ENCODE measurements at regions of chr1 and their contacts with region 1.

Region 1: GRCh38 chr1:223081181-223081994 is 61.7 kb downstream of the TLR5 start:
- DNase-seq: peak; percentile 85
- H3K4me3 ChIP-seq: peak overlapping the region; percentile 17 to 49 (median 25)
- H3K27ac ChIP-seq: peak overlapping the region; percentile 60 to 76 (median 64)
- H3K4me1 ChIP-seq: peaks cover 0 to 12% (median 3%) of the 10 kb centered on the region in 4 donors
- H3K27me3 ChIP-seq: no peaks in the 10 kb centered on the region
- CTCF ChIP-seq: peak; percentile 92 to 97 (median 94)
- EP300 ChIP-seq: no peak
- POLR2A ChIP-seq: no peak

Region 2: GRCh38 chr1:222754366-222755139 is 326.8 kb before region 1 on chr1:
- in situ Hi-C with region 1: no loop called
- intact Hi-C with region 1: loop called (anchors 10 kb)
- DNase-seq: peak; percentile 31
- H3K4me3 ChIP-seq: no peak overlapping the region
- H3K27ac ChIP-seq: peak overlapping the region; percentile 18 to 38 (median 31)
- H3K4me1 ChIP-seq: peaks cover 0 to 9% (median 0%) of the 10 kb centered on the region in 4 donors
- H3K27me3 ChIP-seq: no peaks in the 10 kb centered on the region
- CTCF ChIP-seq: no peak
- EP300 ChIP-seq: no peak
- POLR2A ChIP-seq: no peak

Region 3: GRCh38 chr1:223378754-223379153 is 297.4 kb after region 1 on chr1:
- in situ Hi-C with region 1: no loop called
- intact Hi-C with region 1: no loop called
- DNase-seq: no peak
- H3K4me3 ChIP-seq: no peak overlapping the region
- H3K27ac ChIP-seq: no peak overlapping the region
- H3K4me1 ChIP-seq: no peaks in the 10 kb centered on the region
- H3K27me3 ChIP-seq: peaks cover 9% of the 10 kb centered on the region
- CTCF ChIP-seq: no peak
- EP300 ChIP-seq: no peak
- POLR2A ChIP-seq: no peak

Measured in transverse colon (tissue), 4 donors.